Activated CD4-positive, alpha-beta T cell treated with anti-CD3 and anti-CD28 coated beads for 36 hours (primary cell): ENCODE measurements at regions of chr11 and their contacts with region 1.

Region 1: DNA sequence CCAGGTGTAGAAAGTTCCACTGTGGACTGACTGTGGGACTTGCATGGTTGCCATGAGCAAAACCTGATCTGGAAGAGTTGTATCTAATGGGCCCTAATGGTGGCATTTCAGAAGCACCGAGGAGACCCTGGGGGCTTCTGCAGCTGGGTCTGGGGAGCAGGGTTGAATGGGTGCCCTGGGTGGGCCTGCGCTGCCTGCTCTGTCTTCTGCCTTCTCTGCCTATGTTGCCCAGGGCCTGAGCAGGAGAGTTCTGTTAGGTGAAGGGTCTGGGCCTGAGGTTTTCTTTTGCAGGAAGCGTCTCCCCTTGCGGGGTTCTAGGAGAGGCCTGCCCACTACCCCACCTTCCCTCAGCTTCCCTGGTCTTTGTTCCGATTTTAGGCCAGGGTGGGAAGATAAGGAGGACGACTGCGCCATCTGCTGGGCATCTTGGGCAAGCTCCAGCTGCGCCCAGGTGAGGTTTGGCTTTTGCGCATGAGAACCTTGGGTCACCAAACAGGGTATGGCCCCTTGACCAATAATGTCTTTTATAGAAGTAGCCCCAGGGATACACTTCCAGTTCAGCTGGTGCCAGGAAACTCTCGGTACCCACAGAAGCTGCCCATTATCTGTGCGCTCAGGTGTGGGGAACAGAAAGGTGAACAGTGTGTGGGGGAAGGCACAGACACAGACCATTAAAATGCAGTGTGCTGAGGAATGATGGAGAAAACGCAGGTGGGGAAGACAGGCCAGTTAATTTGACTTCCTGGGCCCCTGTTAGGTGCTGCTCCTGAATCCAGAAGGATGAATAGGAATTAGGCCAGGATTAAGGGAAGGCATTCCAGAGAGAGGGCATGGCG is 23.2 kb downstream of the COMMD9 start:
- DNase-seq: peak; percentile 80
- ATAC-seq: peak; percentile 77
- H3K4me3 Mint-ChIP-seq: no peak overlapping the region
- H3K27ac Mint-ChIP-seq: no peak overlapping the region
- H3K4me1 Mint-ChIP-seq: no peaks in the 10 kb centered on the region
- H3K27me3 Mint-ChIP-seq: peaks cover 8% of the 10 kb centered on the region

Region 2: GRCh38 chr11:35822815-35823495 is 443.1 kb before region 1 on chr11:
- CTCF ChIA-PET with region 1: interaction called, 6 read pairs
- POLR2A ChIA-PET with region 1: no interaction called
- intact Hi-C with region 1: loop called (anchors 1 to 10 kb)
- DNase-seq: no peak
- ATAC-seq: no peak
- H3K4me3 Mint-ChIP-seq: no peak overlapping the region
- H3K27ac Mint-ChIP-seq: no peak overlapping the region
- H3K4me1 Mint-ChIP-seq: peaks cover 12% of the 10 kb centered on the region
- H3K27me3 Mint-ChIP-seq: no peaks in the 10 kb centered on the region

Region 3: GRCh38 chr11:36041988-36042611 is 223.9 kb before region 1 on chr11:
- CTCF ChIA-PET with region 1: interaction called, 5 read pairs
- POLR2A ChIA-PET with region 1: no interaction called
- intact Hi-C with region 1: loop called in 1 of 2 experiments (anchors 2 kb)
- DNase-seq: no peak
- ATAC-seq: no peak
- H3K4me3 Mint-ChIP-seq: no peak overlapping the region
- H3K27ac Mint-ChIP-seq: no peak overlapping the region
- H3K4me1 Mint-ChIP-seq: no peaks in the 10 kb centered on the region
- H3K27me3 Mint-ChIP-seq: peaks cover 10% of the 10 kb centered on the region

Region 4: DNA sequence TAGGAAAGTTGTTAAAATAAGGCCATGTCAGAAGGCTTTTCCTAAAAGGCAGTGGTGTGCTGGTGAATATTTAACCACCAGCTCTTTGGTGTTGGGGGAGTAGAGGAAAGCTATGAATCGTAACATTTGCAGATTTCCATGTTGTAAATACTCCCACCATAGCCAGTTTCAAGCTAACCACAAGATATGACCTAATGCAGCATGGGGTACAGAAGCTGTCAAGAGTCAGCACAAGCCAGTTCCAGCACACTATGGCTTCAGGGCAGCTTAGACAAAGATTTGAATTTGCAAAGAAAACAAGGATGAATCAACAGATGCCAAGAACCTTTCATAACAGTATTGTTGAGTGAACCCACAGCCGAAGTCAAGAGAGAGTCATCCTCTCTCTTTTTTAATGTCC is 16.8 kb before region 1 on chr11:
- CTCF ChIA-PET with region 1: interaction called, 13 read pairs
- POLR2A ChIA-PET with region 1: no interaction called
- intact Hi-C with region 1: no loop called
- DNase-seq: no peak
- ATAC-seq: peak; percentile 80
- H3K4me3 Mint-ChIP-seq: no peak overlapping the region
- H3K27ac Mint-ChIP-seq: no peak overlapping the region
- H3K4me1 Mint-ChIP-seq: no peaks in the 10 kb centered on the region
- H3K27me3 Mint-ChIP-seq: peaks cover 30% of the 10 kb centered on the region

Region 5: GRCh38 chr11:36478700-36479329 is 212.8 kb after region 1 on chr11:
- CTCF ChIA-PET with region 1: interaction called, 11 read pairs
- POLR2A ChIA-PET with region 1: no interaction called
- intact Hi-C with region 1: no loop called
- DNase-seq: peak; percentile 54
- ATAC-seq: peak; percentile 44
- H3K4me3 Mint-ChIP-seq: no peak overlapping the region
- H3K27ac Mint-ChIP-seq: no peak overlapping the region
- H3K4me1 Mint-ChIP-seq: peaks cover 6% of the 10 kb centered on the region
- H3K27me3 Mint-ChIP-seq: no peaks in the 10 kb centered on the region